H1 (cell line): ENCODE measurements at regions of chr3 and their contacts with region 1.

Region 1: GRCh38 chr3:66407611-66408218 is 93.1 kb downstream of the LRIG1 start:
- DNase-seq: peak; percentile 76 to 97
- H3K4me3 ChIP-seq: no peak overlapping the region
- H3K27ac ChIP-seq: no peak overlapping the region
- H3K4me1 ChIP-seq: peaks cover 0 to 12% (median 7%) of the 10 kb centered on the region in 4 experiments; a peak in 4 of 7 replicates
- H3K27me3 ChIP-seq: no peaks in the 10 kb centered on the region
- CTCF ChIP-seq: peak in 2 of 3 experiments; percentile 86 to 94; a peak in 3 of 4 replicates
- EP300 ChIP-seq: no peak
- POLR2A ChIP-seq: no peak
- RAD21 ChIP-seq: peak; percentile 92 to 93

Region 2: GRCh38 chr3:66248641-66249040 is 159.1 kb before region 1 on chr3:
- CTCF ChIA-PET with region 1: no interaction called
- POLR2A ChIA-PET with region 1: no interaction called
- DNase-seq: no peak
- H3K4me3 ChIP-seq: no peak overlapping the region
- H3K27ac ChIP-seq: no peak overlapping the region
- H3K4me1 ChIP-seq: no peaks in the 10 kb centered on the region
- H3K27me3 ChIP-seq: no peaks in the 10 kb centered on the region
- CTCF ChIP-seq: no peak
- EP300 ChIP-seq: no peak
- POLR2A ChIP-seq: no peak
- RAD21 ChIP-seq: no peak

Region 3: DNA sequence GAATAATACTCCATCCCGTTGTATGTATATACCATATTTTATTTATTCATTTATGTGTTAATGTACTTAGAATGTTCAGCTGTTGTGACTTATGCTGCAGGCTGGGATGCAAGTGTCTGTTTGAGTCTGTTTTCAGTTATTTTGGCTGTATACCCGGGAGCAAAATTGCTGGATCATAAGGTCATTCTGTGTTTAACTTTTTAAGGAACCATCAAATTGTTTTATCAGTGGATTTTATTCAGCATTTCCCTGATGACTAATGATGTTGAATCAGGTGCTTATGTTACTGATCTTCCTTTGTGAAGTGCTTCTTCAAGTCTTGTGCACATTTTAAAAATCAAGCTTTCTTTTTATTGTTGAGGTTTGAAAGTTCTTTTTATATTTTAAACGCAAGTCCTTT is 68.8 kb before region 1 on chr3:
- CTCF ChIA-PET with region 1: no interaction called
- POLR2A ChIA-PET with region 1: no interaction called
- DNase-seq: no peak
- H3K4me3 ChIP-seq: no peak overlapping the region
- H3K27ac ChIP-seq: no peak overlapping the region
- H3K4me1 ChIP-seq: peaks cover 0 to 5% (median 4%) of the 10 kb centered on the region in 4 experiments; a peak in 4 of 7 replicates
- H3K27me3 ChIP-seq: no peaks in the 10 kb centered on the region
- CTCF ChIP-seq: no peak
- EP300 ChIP-seq: no peak
- POLR2A ChIP-seq: no peak
- RAD21 ChIP-seq: no peak

Region 4: GRCh38 chr3:66372681-66373350 is 34.9 kb before region 1 on chr3:
- CTCF ChIA-PET with region 1: interaction called, 11 read pairs
- POLR2A ChIA-PET with region 1: no interaction called
- DNase-seq: peak; percentile 51 to 68
- H3K4me3 ChIP-seq: no peak overlapping the region
- H3K27ac ChIP-seq: no peak overlapping the region
- H3K4me1 ChIP-seq: no peaks in the 10 kb centered on the region
- H3K27me3 ChIP-seq: no peaks in the 10 kb centered on the region
- CTCF ChIP-seq: peak; percentile 76 to 96 (median 87)
- EP300 ChIP-seq: no peak
- POLR2A ChIP-seq: peak in 1 of 2 experiments; percentile 34; a peak in 1 of 3 replicates
- RAD21 ChIP-seq: peak; percentile 95 to 99

Region 5: DNA sequence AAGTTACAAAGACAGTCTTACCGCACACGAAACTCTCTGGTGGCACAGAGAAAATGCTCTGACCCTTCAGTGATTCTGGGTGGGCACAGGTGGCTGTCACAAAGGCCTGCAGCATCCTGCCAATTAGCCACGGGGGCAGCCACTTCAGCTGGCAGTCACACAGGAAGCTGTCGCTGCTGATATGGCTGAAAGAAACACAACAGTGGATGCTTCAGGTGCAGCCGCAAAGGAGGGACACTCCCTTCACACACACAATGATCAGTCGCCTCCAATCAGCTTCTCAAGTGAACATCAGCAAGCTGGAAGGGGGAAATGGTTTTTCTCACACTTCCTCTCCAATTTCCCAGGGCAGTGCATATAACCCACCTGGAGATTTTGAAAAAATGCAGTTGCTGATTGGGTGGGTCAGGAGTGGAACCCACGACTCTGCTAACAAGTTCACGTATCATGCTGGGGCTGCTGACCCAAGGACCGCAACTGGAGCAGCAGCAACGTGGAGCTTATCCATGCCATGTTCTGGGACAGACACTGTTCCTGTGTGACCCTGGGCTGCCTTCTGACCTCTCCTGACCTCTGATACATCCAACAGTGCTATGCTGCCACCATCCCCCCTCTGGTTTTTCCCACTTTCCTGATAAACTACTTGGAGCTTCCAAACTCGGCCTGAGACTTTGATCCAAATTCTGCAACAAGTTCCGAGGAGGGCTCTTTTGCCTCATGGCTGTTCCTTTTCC is 13.5 kb before region 1 on chr3:
- CTCF ChIA-PET with region 1: interaction called, 22 read pairs
- POLR2A ChIA-PET with region 1: no interaction called
- DNase-seq: no peak
- H3K4me3 ChIP-seq: no peak overlapping the region
- H3K27ac ChIP-seq: no peak overlapping the region
- H3K4me1 ChIP-seq: no peaks in the 10 kb centered on the region; a peak in 1 of 7 replicates
- H3K27me3 ChIP-seq: no peaks in the 10 kb centered on the region
- CTCF ChIP-seq: no peak
- EP300 ChIP-seq: no peak
- POLR2A ChIP-seq: no peak; a peak in 1 of 3 replicates
- RAD21 ChIP-seq: no peak

Region 6: GRCh38 chr3:66442254-66443117 is 34.8 kb after region 1 on chr3:
- CTCF ChIA-PET with region 1: interaction called, 25 read pairs
- POLR2A ChIA-PET with region 1: interaction called, 5 read pairs
- DNase-seq: peak; percentile 71 to 89
- H3K4me3 ChIP-seq: peak overlapping the region in 3 of 4 experiments; percentile 2 to 49 (median 3); a peak in 5 of 8 replicates
- H3K27ac ChIP-seq: peak overlapping the region; percentile 65
- H3K4me1 ChIP-seq: peaks cover 39 to 53% (median 41%) of the 10 kb centered on the region in 4 experiments
- H3K27me3 ChIP-seq: no peaks in the 10 kb centered on the region
- CTCF ChIP-seq: no peak
- EP300 ChIP-seq: 0 out of 3 replicates have a peak, but pooled peaks of 1 of the 2 experiments have one; percentile 78
- POLR2A ChIP-seq: peak in 1 of 2 experiments; percentile 81; a peak in 2 of 3 replicates
- RAD21 ChIP-seq: no peak; a peak in 1 of 4 replicates

Region 7: GRCh38 chr3:66490214-66490613 is 82.5 kb after region 1 on chr3:
- CTCF ChIA-PET with region 1: interaction called, 19 read pairs
- POLR2A ChIA-PET with region 1: interaction called, 5 read pairs
- DNase-seq: no peak
- H3K4me3 ChIP-seq: no peak overlapping the region
- H3K27ac ChIP-seq: no peak overlapping the region
- H3K4me1 ChIP-seq: peaks cover 6 to 52% (median 39%) of the 10 kb centered on the region in 4 experiments
- H3K27me3 ChIP-seq: no peaks in the 10 kb centered on the region
- CTCF ChIP-seq: no peak
- EP300 ChIP-seq: no peak
- POLR2A ChIP-seq: no peak; a peak in 1 of 3 replicates
- RAD21 ChIP-seq: no peak

Region 8: GRCh38 chr3:66572938-66573710 is 165.4 kb after region 1 on chr3:
- CTCF ChIA-PET with region 1: interaction called, 11 read pairs
- POLR2A ChIA-PET with region 1: interaction called, 5 read pairs
- DNase-seq: peak; percentile 70 to 88
- H3K4me3 ChIP-seq: peak overlapping the region; percentile 1 to 45 (median 24); a peak in 5 of 8 replicates
- H3K27ac ChIP-seq: peak overlapping the region; percentile 67
- H3K4me1 ChIP-seq: peaks cover 3 to 14% (median 8%) of the 10 kb centered on the region in 4 experiments; a peak in 6 of 7 replicates
- H3K27me3 ChIP-seq: peaks cover 0 to 13% (median 0%) of the 10 kb centered on the region in 4 experiments; a peak in 2 of 7 replicates
- CTCF ChIP-seq: peak; percentile 75 to 95 (median 95)
- EP300 ChIP-seq: peak in 1 of 2 experiments; percentile 93; a peak in 1 of 3 replicates
- POLR2A ChIP-seq: no peak
- RAD21 ChIP-seq: peak; percentile 67 to 85

Region 9: DNA sequence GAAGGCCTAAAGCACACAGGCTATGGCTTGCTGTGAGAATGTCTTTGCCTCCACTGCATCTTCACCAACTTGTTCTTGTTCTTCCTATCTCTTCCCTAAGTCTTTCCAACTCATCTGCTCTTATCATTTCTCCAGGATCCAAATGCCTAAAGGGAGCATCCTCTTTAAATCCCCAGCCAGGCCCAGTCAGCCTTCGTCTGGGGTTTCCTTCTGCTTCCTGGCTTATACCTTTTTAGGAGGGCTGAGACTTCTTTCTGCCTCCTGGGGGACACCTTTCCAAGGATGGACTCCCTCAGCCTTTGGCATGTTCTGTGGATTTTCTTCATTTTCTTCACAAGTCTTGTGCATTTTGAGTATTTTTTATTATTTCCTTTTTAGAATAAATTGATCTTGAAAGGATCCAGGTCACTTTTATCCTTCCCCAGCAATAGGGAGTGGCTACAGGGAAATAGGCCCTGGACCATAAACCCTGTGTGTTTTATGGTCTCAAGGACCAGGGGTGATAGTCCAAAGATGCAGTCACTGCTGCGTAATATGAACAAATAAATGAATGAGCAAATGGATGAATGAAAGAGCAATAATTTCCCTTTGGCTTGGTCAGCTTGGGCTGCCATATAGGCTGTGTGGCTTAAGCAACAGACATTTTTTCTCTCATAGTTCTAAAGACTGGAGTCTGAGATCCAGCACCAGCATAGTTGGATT is 215.2 kb after region 1 on chr3:
- CTCF ChIA-PET with region 1: no interaction called
- POLR2A ChIA-PET with region 1: no interaction called
- DNase-seq: no peak
- H3K4me3 ChIP-seq: no peak overlapping the region
- H3K27ac ChIP-seq: no peak overlapping the region
- H3K4me1 ChIP-seq: peaks cover 0 to 5% (median 2%) of the 10 kb centered on the region in 4 experiments; a peak in 5 of 7 replicates
- H3K27me3 ChIP-seq: no peaks in the 10 kb centered on the region
- CTCF ChIP-seq: no peak
- EP300 ChIP-seq: no peak
- POLR2A ChIP-seq: no peak
- RAD21 ChIP-seq: no peak

Region 10: DNA sequence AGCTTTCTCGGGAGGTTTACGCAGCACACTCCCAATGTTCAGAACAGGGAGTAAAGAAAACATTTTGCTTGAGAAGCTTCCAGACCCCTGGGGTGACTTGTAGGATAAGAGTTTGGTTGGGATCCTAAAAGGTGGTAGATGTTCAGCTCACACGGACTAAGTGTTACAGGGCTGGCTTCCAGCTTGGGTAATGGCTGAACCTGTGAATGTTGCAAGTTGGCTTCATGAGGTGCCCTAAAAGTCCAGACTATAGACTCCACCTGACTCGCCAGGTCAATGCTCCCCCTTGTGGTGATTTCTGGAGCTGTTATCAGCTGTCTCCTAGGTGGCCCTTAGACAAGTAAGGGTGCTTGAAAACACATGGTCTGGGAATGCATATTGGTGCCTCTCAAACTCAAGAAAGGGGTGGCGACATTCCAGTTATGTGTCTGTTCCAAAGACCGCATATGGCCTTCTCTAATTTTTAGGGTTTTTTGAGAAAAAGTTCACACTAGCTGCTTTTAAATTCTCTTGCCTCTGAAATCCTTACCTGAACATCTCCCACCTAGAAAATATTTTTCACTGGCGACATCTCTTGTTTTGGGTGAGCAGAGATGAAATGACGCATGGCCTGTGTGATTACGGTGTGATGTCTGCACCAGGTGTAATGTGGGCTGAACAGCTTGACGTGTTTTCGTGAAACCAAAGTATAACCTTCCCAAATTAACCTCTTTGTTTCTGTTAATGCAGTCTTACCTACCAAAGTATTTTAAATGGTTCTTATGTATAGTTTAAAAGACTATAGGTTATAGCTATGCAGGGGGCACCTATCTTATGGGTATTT is 414.7 kb after region 1 on chr3:
- CTCF ChIA-PET with region 1: interaction called, 42 read pairs
- POLR2A ChIA-PET with region 1: no interaction called
- DNase-seq: peak; percentile 78 to 91
- H3K4me3 ChIP-seq: no peak overlapping the region
- H3K27ac ChIP-seq: no peak overlapping the region
- H3K4me1 ChIP-seq: peaks cover 0 to 7% (median 6%) of the 10 kb centered on the region in 4 experiments; a peak in 5 of 7 replicates
- H3K27me3 ChIP-seq: no peaks in the 10 kb centered on the region
- CTCF ChIP-seq: peak; percentile 70 to 94 (median 78)
- EP300 ChIP-seq: no peak
- POLR2A ChIP-seq: no peak
- RAD21 ChIP-seq: peak; percentile 80 to 87